PC-9 (cell line): ENCODE measurements at regions of chr7 and their contacts with region 1.

Region 1: DNA sequence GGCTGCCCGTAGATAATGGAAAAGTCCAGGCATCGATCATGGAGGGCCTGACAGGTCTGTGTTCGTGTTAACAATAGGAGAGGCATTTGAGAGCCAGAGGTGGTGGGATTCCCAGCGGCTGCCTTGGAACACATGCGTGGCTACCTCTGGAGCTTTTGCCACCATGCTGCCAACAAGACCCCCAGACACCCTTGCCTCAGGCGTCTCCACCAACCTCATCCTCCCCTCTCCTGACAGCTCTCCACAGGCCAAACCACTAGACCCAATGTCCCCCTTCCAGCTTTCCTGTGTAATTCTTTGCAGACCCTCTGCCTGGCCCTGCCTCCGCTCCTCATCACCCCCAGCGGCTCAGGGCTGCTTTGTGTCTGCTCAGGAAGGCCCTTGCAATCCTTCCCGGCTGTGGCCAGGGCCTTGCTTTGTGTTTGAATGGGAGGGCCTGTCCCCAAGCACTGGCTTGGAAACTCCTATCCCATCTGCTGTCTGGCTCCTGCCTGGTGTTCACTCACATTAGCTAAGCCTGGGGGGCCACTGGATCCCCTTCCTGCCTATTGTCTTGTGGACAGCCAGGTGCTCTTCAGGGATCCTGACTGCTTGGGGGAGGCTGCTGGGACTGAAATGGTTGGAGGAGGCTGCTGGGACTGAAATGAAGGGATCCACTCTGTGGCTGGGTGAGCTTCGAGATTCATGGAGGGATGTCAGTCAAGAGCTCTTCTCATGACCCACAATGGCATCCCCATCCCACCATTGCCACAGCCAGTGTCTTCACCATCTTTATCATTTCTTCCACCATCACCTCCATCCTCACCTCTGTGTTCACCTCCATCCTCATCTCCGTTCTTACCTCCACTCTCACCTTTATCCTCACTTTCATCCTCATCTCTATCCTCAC is 60.8 kb upstream of the ELN start:
- DNase-seq: no peak
- H3K4me3 ChIP-seq: no peak overlapping the region
- H3K27ac ChIP-seq: no peak overlapping the region
- H3K4me1 ChIP-seq: no peaks in the 10 kb centered on the region
- H3K27me3 ChIP-seq: no peaks in the 10 kb centered on the region
- CTCF ChIP-seq: no peak

Region 2: DNA sequence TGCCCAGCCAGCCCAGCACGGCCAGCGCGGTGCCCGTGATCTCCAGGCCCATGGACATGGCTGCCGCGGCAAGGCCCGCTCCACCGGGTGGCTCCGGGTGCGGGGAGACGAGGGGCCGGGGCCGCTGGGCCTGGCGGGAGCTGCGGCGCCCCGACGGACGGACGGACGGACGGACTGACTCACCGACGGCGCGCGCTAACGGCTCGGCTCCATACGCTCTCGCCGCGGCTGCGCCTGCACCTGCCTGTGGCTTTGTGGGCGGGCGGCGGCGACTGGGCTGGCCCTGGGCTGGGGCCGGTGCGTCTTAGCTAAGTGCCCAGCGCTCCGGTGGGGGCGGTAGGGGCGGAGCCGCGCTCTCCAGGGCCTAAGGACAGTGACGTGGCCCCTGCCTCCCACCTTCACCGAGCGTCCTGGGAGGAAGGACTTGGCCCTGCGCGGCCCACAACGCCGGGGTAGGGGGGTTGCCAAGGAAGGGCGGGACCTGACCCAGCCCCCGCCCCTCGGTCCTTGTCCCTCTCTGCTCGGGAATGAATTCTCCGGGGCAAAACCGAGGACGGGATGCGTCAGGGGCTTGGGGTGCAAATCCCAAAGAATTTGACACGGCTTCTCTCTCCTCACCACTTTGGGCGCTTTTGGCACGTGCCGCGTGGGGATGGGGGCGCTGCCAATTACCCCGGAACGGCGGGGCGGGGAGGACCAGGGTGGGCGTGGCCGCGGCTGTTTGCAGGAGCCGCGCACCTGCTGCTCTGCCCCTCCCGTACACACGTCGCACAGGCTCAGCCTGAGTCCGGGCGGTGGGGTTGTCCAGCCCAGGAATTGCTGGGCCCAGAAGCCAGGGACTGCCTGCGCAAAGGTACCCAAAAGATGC is 197.0 kb before region 1 on chr7 and contains the start of gene CLDN3:
- CTCF ChIA-PET with region 1: no interaction called
- POLR2A ChIA-PET with region 1: no interaction called
- intact Hi-C with region 1: no loop called
- DNase-seq: peak; percentile 83 to 97
- H3K4me3 ChIP-seq: peak within 1 kb of the TSS; percentile 66; the same call in 1 of the 2 replicates
- H3K27ac ChIP-seq: peak within 1 kb of the TSS; percentile 58
- H3K4me1 ChIP-seq: peaks cover 23% of the 10 kb centered on the region
- H3K27me3 ChIP-seq: no peaks in the 10 kb centered on the region
- CTCF ChIP-seq: no peak
- total RNA-seq, gene CLDN3: 31.3 and 45.2 TPM in 2 replicates

Region 3: GRCh38 chr7:73811760-73812168 is 155.4 kb before region 1 on chr7:
- CTCF ChIA-PET with region 1: interaction called, 13 read pairs
- POLR2A ChIA-PET with region 1: no interaction called
- intact Hi-C with region 1: no loop called
- DNase-seq: peak; percentile 55 to 75
- H3K4me3 ChIP-seq: no peak overlapping the region
- H3K27ac ChIP-seq: no peak overlapping the region
- H3K4me1 ChIP-seq: peaks cover 22% of the 10 kb centered on the region
- H3K27me3 ChIP-seq: no peaks in the 10 kb centered on the region
- CTCF ChIP-seq: peak; percentile 89

Region 4: GRCh38 chr7:73842247-73842895 is 124.8 kb before region 1 on chr7 and contains the start of gene METTL27:
- CTCF ChIA-PET with region 1: no interaction called
- POLR2A ChIA-PET with region 1: interaction called, 11 read pairs
- intact Hi-C with region 1: no loop called
- DNase-seq: peak; percentile 79 to 97
- H3K4me3 ChIP-seq: peak within 1 kb of the TSS; percentile 84
- H3K27ac ChIP-seq: peak within 1 kb of the TSS; percentile 59
- H3K4me1 ChIP-seq: peaks cover 20% of the 10 kb centered on the region
- H3K27me3 ChIP-seq: no peaks in the 10 kb centered on the region
- CTCF ChIP-seq: no peak
- total RNA-seq, gene METTL27: 23.2 and 34.7 TPM in 2 replicates

Region 5: GRCh38 chr7:74027671-74028320 is 60.6 kb after region 1 on chr7 and contains the start of gene ELN:
- CTCF ChIA-PET with region 1: no interaction called
- POLR2A ChIA-PET with region 1: no interaction called
- intact Hi-C with region 1: no loop called
- DNase-seq: no peak
- H3K4me3 ChIP-seq: no peak within 1 kb of the TSS
- H3K27ac ChIP-seq: no peak within 1 kb of the TSS
- H3K4me1 ChIP-seq: peaks cover 9% of the 10 kb centered on the region
- H3K27me3 ChIP-seq: peaks cover 12% of the 10 kb centered on the region; the same call in 1 of the 2 replicates
- CTCF ChIP-seq: no peak
- total RNA-seq, gene ELN: 0.11 TPM in 1 of 2 replicates, not detected in the other